Heart right ventricle (tissue), 16 donors: ENCODE measurements at regions of chr15 and their contacts with region 1.

Region 1: GRCh38 chr15:49155110-49155833 is at the start of gene COPS2:
- DNase-seq: peak; percentile 86 to 96
- ATAC-seq: peak; percentile 98 to 99 (median 99)
- H3K4me3 ChIP-seq: peak within 1 kb of the TSS; percentile 84 to 98 (median 92)
- H3K27ac ChIP-seq: peak within 1 kb of the TSS; percentile 45 to 94 (median 88)
- H3K4me1 ChIP-seq: peaks cover 2 to 58% (median 41%) of the 10 kb centered on the region in 9 donors
- H3K27me3 ChIP-seq: no peaks in the 10 kb centered on the region
- CTCF ChIP-seq: peak in 1 of 9 donors; percentile 9
- total RNA-seq, gene COPS2: 71.3 to 91.8 (median 86.8) TPM

Region 2: DNA sequence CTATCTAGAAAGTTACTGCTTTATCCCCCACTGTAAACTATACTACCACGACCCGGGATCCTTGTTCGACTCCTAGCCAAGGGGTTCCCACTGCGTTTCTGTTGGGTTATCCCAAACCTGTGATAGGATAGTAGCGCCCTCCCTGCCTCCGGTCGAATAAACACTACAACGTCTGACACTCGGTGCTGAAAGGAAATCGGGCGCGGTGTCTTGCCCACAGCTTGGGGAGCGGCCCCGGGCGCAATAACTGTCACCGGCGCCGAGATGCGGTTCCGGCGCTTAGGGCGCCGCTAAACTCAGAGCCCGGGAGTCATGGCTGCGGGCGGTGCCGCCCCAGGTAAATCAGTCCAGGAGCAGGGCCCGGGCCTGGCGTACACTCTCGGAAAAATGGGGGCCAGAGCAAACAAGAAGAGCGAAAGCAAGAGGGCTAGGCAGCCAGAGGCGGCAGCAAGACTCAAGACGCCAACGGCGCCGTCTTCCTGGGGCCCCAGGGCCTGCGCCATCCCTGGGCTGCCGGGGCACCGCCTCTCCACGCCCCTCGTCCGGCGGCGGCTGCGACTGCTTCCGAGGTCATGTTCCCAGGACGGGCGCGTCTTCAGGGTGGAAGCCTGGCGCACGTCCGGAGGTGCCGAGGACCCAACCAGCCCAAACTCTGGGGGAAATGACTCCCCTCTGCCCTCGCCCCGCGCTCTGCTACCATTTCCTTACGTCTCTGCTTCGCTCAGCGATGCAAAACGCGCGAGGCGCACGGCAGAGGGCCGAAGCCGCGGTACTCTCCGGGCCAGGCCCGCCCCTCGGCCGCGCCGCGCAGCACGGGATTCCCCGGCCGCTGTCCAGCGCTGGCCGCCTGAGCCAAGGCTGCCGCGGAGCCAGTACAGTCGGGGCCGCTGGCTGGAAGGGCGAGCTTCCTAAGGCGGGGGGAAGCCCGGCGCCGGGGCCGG is 824.1 kb before region 1 on chr15 and contains the start of gene DUT:
- intact Hi-C with region 1: loop called in 1 of 10 experiments (anchors 10 kb)
- DNase-seq: peak; percentile 88 to 89
- ATAC-seq: peak; percentile 96 to 99 (median 97)
- H3K4me3 ChIP-seq: peak within 1 kb of the TSS; percentile 66 to 98 (median 86)
- H3K27ac ChIP-seq: peak within 1 kb of the TSS; percentile 95 to 100 (median 98)
- H3K4me1 ChIP-seq: peaks cover 4 to 32% (median 16%) of the 10 kb centered on the region in 9 donors
- H3K27me3 ChIP-seq: no peaks in the 10 kb centered on the region
- CTCF ChIP-seq: no peak
- total RNA-seq, gene DUT: 51.9 to 88.4 (median 62.7) TPM